Activated T-helper 1 cell treated with anti-CD3 and anti-CD28 coated beads, Interleukin-12 subunit alpha, Interleukin-12 subunit beta, Interleukin-2, Interleukin-4 antibody, amounts not matched to agents 30 ng/mL and 10 ng/mL and 1 ng/mL, durations not matched to agents 14 hours and 24 hours and 36 hours (primary cell): ENCODE measurements at regions of chr3 and their contacts with region 1.

Region 1: DNA sequence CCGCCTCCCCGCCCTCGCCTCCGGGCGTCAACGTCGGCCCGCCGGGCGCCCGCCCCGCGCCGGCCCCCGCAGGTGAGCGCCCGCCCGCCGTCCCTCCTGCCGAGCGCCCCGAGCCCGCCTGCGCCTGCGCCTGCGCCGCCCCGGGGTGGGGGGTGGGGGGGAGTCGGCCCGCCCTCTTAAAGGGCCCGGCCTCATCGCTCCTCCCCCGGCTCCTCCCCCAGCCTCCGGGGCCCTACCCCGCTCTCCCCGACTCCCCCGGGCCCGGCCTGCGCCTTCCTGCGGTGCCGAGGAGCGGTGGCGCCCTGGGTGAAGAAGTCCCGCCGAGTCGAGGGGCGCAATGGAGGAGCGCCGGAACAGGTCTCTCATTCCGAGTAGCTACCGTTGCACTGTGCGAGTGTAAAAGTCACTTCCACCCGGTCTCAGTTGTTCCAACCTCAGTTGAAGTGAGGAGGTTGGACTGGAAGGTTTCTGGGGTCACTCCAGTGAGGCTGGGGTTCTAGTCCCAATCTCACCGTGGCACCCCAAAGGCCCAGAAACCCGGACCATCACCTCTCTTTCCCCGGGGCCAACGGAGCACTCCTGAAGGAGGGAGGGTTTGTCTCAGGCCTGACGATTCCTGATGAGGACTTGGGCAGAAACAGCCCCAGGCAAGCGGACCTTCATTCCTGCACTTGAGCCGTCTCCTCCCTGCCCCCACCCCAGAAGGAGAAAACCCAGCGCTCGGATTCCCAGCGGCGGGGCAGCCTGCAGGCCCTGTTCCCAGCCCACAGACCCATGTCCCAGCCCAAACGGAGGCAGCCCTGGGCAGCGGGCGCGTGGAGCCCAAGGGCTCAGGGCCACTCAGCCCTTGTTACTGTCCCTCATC is 1.5 kb upstream of the TNK2 start:
- DNase-seq: peak; percentile 83
- H3K4me3 Mint-ChIP-seq: peak overlapping the region; percentile 72
- H3K27ac Mint-ChIP-seq: peak overlapping the region; percentile 55
- H3K4me1 Mint-ChIP-seq: peaks cover 37% of the 10 kb centered on the region
- H3K27me3 Mint-ChIP-seq: no peaks in the 10 kb centered on the region

Region 2: GRCh38 chr3:195542698-195543499 is 367.0 kb before region 1 on chr3 and contains the start of gene PPP1R2:
- intact Hi-C with region 1: loop called (anchors 2 kb)
- DNase-seq: peak; percentile 88
- H3K4me3 Mint-ChIP-seq: peak within 1 kb of the TSS; percentile 88
- H3K27ac Mint-ChIP-seq: peak within 1 kb of the TSS; percentile 82
- H3K4me1 Mint-ChIP-seq: peaks cover 84% of the 10 kb centered on the region
- H3K27me3 Mint-ChIP-seq: no peaks in the 10 kb centered on the region
- total RNA-seq, gene PPP1R2: 98.8 and 106 TPM in 2 replicates

Region 3: GRCh38 chr3:195850857-195851543 is 58.9 kb before region 1 on chr3:
- intact Hi-C with region 1: loop called (anchors 2 kb)
- DNase-seq: peak; percentile 83
- H3K4me3 Mint-ChIP-seq: no peak overlapping the region
- H3K27ac Mint-ChIP-seq: peak overlapping the region; percentile 41
- H3K4me1 Mint-ChIP-seq: no peaks in the 10 kb centered on the region
- H3K27me3 Mint-ChIP-seq: peaks cover 5% of the 10 kb centered on the region

Region 4: DNA sequence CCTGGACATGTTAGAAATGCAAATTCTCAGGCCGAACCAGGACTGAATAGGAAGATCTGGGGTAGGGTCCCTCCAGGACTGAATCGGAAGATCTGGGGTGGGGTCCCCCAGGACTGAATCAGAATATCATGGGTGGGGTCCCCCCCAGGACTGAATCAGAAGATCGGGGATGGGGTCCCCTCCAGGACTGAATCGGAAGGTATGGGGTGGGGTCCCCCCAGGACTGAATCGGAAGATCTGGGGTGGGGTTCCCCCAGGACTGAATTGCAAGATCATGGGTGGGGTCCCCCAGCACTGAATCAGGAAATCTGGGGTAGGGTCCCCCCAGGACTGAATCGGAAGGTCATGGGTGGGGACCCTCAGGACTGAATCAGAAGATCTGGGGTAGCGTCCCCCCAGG is 46.7 kb after region 1 on chr3:
- intact Hi-C with region 1: loop called (anchors 5 kb)
- DNase-seq: no peak
- H3K4me3 Mint-ChIP-seq: no peak overlapping the region
- H3K27ac Mint-ChIP-seq: peak overlapping the region; percentile 96
- H3K4me1 Mint-ChIP-seq: peaks cover 44% of the 10 kb centered on the region
- H3K27me3 Mint-ChIP-seq: no peaks in the 10 kb centered on the region

Region 5: GRCh38 chr3:196207833-196208607 is 298.1 kb after region 1 on chr3:
- intact Hi-C with region 1: loop called (anchors 5 kb)
- DNase-seq: no peak
- H3K4me3 Mint-ChIP-seq: peak overlapping the region; percentile 80
- H3K27ac Mint-ChIP-seq: peak overlapping the region; percentile 69
- H3K4me1 Mint-ChIP-seq: peaks cover 4% of the 10 kb centered on the region
- H3K27me3 Mint-ChIP-seq: peaks cover 14% of the 10 kb centered on the region